ENCODE measurements at regions of chr20 and their contacts with region 1.

Region 1: GRCh38 chr20:62302341-62303058 is at the start of gene ADRM1:
- DNase-seq: peak; percentile 72
- H3K4me3 ChIP-seq: peak within 1 kb of the TSS; percentile 92
- H3K27me3 ChIP-seq: no peaks in the 10 kb centered on the region
- CTCF ChIP-seq: peak; percentile 91
- polyA plus RNA-seq, gene ADRM1: 81.5 and 115 TPM in 2 replicates

Region 2: GRCh38 chr20:62368976-62369814 is 66.7 kb after region 1 on chr20:
- CTCF ChIA-PET with region 1: interaction called, 55 read pairs
- POLR2A ChIA-PET with region 1: no interaction called
- DNase-seq: no peak
- H3K4me3 ChIP-seq: no peak overlapping the region
- H3K27me3 ChIP-seq: peaks cover 3% of the 10 kb centered on the region; the same call in 1 of the 2 replicates
- CTCF ChIP-seq: peak; percentile 56

Region 3: GRCh38 chr20:62376112-62377063 is 73.9 kb after region 1 on chr20:
- CTCF ChIA-PET with region 1: interaction called, 20 read pairs
- POLR2A ChIA-PET with region 1: no interaction called
- DNase-seq: no peak
- H3K4me3 ChIP-seq: no peak overlapping the region
- H3K27me3 ChIP-seq: no peaks in the 10 kb centered on the region
- CTCF ChIP-seq: peak; percentile 47

Region 4: GRCh38 chr20:62386383-62387218 is 84.1 kb after region 1 on chr20 and contains the start of gene RPS21:
- CTCF ChIA-PET with region 1: interaction called, 39 read pairs
- POLR2A ChIA-PET with region 1: interaction called, 9 read pairs
- DNase-seq: peak; percentile 43
- H3K4me3 ChIP-seq: peak within 1 kb of the TSS; percentile 100
- H3K27me3 ChIP-seq: no peaks in the 10 kb centered on the region
- CTCF ChIP-seq: no peak
- polyA plus RNA-seq, gene RPS21: 3,553 and 3,818 TPM in 2 replicates